Activated CD4-positive, alpha-beta T cell treated with anti-CD3 and anti-CD28 coated beads, Interleukin-2, amount 10 ng/mL, durations not matched to agents 24 days and 14 days (primary cell): ENCODE measurements at regions of chr19 and their contacts with region 1.

Region 1: GRCh38 chr19:36665832-36666231 is 805 bp downstream of the ZNF461 start:
- DNase-seq: no peak
- H3K4me3 Mint-ChIP-seq: peak overlapping the region; percentile 98
- H3K27ac Mint-ChIP-seq: peak overlapping the region; percentile 76
- H3K4me1 Mint-ChIP-seq: peaks cover 23% of the 10 kb centered on the region
- H3K27me3 Mint-ChIP-seq: no peaks in the 10 kb centered on the region

Region 2: GRCh38 chr19:36573020-36573885 is 92.6 kb before region 1 on chr19 and contains the start of gene ZNF529:
- intact Hi-C with region 1: loop called (anchors 1 kb)
- DNase-seq: peak; percentile 97
- H3K4me3 Mint-ChIP-seq: peak within 1 kb of the TSS; percentile 89
- H3K27ac Mint-ChIP-seq: peak within 1 kb of the TSS; percentile 95
- H3K4me1 Mint-ChIP-seq: peaks cover 24% of the 10 kb centered on the region
- H3K27me3 Mint-ChIP-seq: no peaks in the 10 kb centered on the region
- total RNA-seq, gene ZNF529: 16.8 and 17.6 TPM in 2 replicates

Region 3: GRCh38 chr19:36605101-36605876 is 60.5 kb before region 1 on chr19 and contains the start of gene ZNF382:
- intact Hi-C with region 1: loop called (anchors 2 kb)
- DNase-seq: peak; percentile 96
- H3K4me3 Mint-ChIP-seq: peak within 1 kb of the TSS; percentile 89
- H3K27ac Mint-ChIP-seq: peak within 1 kb of the TSS; percentile 98
- H3K4me1 Mint-ChIP-seq: peaks cover 22% of the 10 kb centered on the region
- H3K27me3 Mint-ChIP-seq: no peaks in the 10 kb centered on the region
- total RNA-seq, gene ZNF382: 9.5 and 13.2 TPM in 2 replicates

Region 4: GRCh38 chr19:36652958-36653357 is 12.9 kb before region 1 on chr19:
- intact Hi-C with region 1: loop called (anchors 1 kb)
- DNase-seq: no peak
- H3K4me3 Mint-ChIP-seq: no peak overlapping the region
- H3K27ac Mint-ChIP-seq: no peak overlapping the region
- H3K4me1 Mint-ChIP-seq: no peaks in the 10 kb centered on the region
- H3K27me3 Mint-ChIP-seq: no peaks in the 10 kb centered on the region

Region 5: DNA sequence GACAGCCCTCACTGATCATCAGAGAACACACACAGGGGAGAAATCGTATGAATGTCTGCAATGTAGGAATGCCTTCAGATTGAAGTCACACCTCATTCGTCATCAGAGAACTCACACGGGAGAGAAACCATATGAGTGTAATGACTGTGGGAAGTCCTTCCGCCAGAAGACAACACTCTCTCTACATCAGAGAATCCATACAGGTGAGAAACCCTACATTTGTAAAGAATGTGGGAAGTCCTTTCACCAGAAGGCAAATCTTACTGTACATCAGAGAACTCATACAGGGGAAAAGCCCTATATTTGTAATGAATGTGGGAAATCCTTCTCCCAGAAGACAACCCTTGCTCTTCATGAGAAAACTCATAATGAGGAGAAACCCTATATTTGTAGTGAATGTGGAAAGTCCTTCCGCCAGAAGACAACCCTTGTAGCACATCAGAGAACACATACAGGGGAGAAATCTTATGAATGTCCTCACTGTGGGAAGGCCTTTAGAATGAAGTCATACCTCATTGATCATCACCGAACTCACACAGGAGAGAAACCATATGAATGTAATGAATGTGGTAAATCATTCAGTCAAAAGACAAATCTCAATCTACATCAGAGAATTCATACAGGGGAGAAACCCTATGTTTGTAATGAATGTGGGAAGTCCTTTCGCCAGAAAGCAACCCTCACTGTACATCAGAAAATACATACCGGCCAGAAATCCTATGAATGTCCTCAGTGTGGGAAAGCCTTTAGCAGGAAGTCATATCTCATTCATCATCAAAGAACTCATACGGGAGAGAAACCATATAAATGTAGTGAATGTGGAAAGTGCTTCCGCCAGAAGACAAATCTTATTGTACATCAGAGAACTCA is 54.1 kb after region 1 on chr19:
- intact Hi-C with region 1: no loop called
- DNase-seq: no peak
- H3K4me3 Mint-ChIP-seq: no peak overlapping the region
- H3K27ac Mint-ChIP-seq: no peak overlapping the region
- H3K4me1 Mint-ChIP-seq: no peaks in the 10 kb centered on the region
- H3K27me3 Mint-ChIP-seq: no peaks in the 10 kb centered on the region